Endothelial cell of umbilical vein (primary cell): ENCODE measurements at regions of chr5 and their contacts with region 1.

Region 1: GRCh38 chr5:127875235-127876021 is 172.2 kb downstream of the CCDC192 start:
- DNase-seq: peak; percentile 70
- H3K4me3 ChIP-seq: no peak overlapping the region
- H3K27ac ChIP-seq: no peak overlapping the region
- H3K4me1 ChIP-seq: peaks cover 27% of the 10 kb centered on the region
- H3K27me3 ChIP-seq: no peaks in the 10 kb centered on the region
- CTCF ChIP-seq: peak in 1 of 2 donors; percentile 29
- POLR2A ChIP-seq: no peak

Region 2: DNA sequence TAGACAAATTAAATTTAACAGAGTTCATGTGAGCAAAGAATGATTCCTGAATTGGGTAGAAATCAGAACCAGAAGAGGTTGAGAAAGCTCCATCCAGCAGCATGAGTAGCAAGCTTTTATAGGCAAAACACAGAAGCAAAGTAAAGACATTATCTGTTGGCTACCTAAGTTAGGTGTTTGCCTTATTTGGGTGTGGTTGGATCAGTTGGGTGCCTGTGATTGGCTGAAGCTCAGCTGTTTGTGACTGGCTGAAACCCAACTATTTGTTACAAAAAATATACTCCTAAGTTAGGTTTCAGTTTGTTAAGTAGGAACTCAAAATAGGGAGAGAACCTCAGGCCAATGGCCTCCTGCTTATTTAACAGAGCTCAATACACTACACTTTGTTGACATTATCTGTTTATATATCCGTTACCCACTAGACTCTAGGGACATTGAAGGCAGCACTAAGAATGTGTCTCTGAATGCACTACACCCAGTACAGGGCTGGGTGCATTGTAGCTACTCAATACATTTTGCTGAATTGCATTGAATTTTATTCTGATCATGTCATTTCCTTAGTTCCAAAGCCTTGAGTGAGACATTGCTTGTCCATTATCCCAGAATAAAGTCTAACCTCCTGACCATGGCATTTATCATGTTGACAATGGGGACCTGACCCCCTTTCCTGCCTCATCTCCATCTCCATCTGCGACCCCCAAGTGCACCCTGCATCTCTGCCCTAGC is 73.5 kb before region 1 on chr5:
- CTCF ChIA-PET with region 1: interaction called, 6 read pairs
- POLR2A ChIA-PET with region 1: interaction called, 3 read pairs
- dilution Hi-C with region 1: no loop called
- intact Hi-C with region 1: loop called (anchors 1 kb)
- DNase-seq: peak; percentile 71
- H3K4me3 ChIP-seq: no peak overlapping the region
- H3K27ac ChIP-seq: peak overlapping the region; percentile 75
- H3K4me1 ChIP-seq: peaks cover 17% of the 10 kb centered on the region
- H3K27me3 ChIP-seq: no peaks in the 10 kb centered on the region
- CTCF ChIP-seq: no peak
- POLR2A ChIP-seq: no peak

Region 3: DNA sequence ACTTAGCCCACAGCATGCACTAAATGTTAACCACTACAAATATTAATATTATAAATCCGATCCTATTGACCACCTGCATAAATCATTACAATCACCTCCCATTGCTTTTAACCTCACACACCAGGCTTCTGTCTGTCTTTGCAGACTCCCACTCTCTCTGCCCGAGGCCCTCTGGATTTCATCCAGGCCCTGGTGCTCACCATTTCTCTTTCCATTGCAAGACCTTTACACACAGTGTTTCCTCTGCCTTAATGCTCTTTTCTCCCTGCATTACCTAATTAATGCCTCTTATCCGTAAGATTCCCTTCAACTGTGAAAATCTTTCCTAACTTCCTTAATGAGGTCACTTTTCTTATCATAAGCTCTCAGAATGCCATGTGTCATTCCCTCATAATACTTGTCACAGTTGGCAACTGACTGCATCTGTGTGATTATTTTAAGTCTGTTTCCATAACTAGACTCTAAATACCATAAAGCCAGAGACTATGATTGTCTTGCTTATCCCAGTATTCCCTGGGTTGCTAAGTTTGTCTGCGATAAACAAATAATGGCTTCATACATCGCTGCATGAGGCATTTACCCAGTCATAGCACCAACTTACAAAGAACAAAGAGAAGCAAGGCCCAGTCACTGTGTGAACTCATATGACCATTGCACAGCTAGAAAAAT is 17.2 kb before region 1 on chr5:
- CTCF ChIA-PET with region 1: interaction called, 10 read pairs
- POLR2A ChIA-PET with region 1: no interaction called
- dilution Hi-C with region 1: no loop called
- intact Hi-C with region 1: loop called (anchors 1 kb)
- DNase-seq: peak; percentile 89
- H3K4me3 ChIP-seq: no peak overlapping the region
- H3K27ac ChIP-seq: peak overlapping the region; percentile 84
- H3K4me1 ChIP-seq: peaks cover 27% of the 10 kb centered on the region
- H3K27me3 ChIP-seq: no peaks in the 10 kb centered on the region
- CTCF ChIP-seq: no peak
- POLR2A ChIP-seq: no peak

Region 4: DNA sequence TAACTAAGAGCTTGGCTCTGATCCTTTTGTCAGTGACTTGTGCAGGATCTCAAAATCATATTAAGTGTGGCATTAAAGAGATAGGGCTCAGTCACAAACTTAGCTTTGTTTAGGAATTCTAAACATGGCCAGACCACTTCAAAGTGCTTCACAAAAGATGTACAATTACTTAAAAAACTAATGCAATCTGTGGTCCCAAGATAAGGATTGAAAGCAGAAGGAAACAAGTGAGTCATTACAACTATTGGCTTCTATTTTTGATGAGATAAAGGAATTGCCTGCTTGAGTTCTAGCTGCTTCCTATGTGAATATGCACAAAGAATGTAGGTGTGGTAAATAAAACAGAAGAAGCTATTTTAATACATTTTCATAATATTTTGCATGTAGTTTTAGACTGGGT is 163.2 kb after region 1 on chr5:
- CTCF ChIA-PET with region 1: interaction called, 12 read pairs
- POLR2A ChIA-PET with region 1: no interaction called
- dilution Hi-C with region 1: no loop called
- intact Hi-C with region 1: loop called (anchors 1 kb)
- DNase-seq: peak; percentile 94
- H3K4me3 ChIP-seq: no peak overlapping the region
- H3K27ac ChIP-seq: peak overlapping the region; percentile 87
- H3K4me1 ChIP-seq: peaks cover 29% of the 10 kb centered on the region
- H3K27me3 ChIP-seq: no peaks in the 10 kb centered on the region
- CTCF ChIP-seq: no peak
- POLR2A ChIP-seq: peak; percentile 83

Region 5: DNA sequence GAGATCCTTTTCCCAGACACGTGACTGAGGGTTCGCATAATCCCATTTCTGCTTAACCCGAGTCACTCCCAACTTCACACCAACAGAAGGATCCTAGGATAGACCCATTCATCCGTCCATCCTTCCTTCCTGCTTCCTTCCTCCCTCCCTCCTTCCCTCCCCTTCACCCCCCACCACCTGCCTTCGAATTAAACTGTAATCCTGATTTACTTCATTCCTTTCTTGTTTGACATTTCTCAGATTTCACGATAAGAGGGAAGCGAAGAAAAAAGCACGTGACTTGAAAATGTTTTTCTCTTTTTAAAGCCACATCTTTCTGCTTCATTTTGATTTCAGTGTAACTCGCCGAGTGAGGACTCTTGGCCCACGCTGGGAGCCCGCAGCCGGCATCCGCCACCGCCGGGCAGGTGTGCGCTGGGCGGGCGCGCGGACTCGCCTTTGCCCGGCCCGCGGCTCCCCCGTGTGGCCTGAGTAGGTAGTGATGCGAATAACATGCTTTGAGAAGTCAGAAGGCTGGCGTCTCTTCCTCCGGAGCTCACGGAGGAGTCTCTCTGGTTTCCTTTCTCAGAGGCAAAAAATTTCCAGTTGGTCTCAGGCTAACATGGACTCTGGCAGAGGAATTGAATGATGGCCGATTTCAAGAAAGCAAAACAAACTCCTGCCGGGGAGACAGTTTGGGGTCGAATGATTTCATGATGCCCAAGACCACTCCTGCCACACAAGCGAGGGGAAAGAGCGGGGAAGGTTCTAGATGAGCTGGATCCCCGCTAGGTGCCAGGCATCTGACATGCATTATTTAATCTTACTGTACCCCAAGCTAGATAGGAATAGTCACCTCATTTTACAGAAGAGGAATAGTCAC is 325.9 kb after region 1 on chr5:
- CTCF ChIA-PET with region 1: interaction called, 79 read pairs
- POLR2A ChIA-PET with region 1: no interaction called
- dilution Hi-C with region 1: no loop called
- intact Hi-C with region 1: loop called (anchors 1 kb)
- DNase-seq: peak; percentile 63
- H3K4me3 ChIP-seq: no peak overlapping the region
- H3K27ac ChIP-seq: no peak overlapping the region
- H3K4me1 ChIP-seq: peaks cover 10% of the 10 kb centered on the region
- H3K27me3 ChIP-seq: no peaks in the 10 kb centered on the region
- CTCF ChIP-seq: peak; percentile 79 to 85
- POLR2A ChIP-seq: no peak

Region 6: GRCh38 chr5:128674825-128675446 is 799.5 kb after region 1 on chr5:
- CTCF ChIA-PET with region 1: no interaction called
- POLR2A ChIA-PET with region 1: no interaction called
- dilution Hi-C with region 1: no loop called
- intact Hi-C with region 1: loop called (anchors 10 kb)
- DNase-seq: peak; percentile 63
- H3K4me3 ChIP-seq: no peak overlapping the region
- H3K27ac ChIP-seq: no peak overlapping the region
- H3K4me1 ChIP-seq: no peaks in the 10 kb centered on the region
- H3K27me3 ChIP-seq: no peaks in the 10 kb centered on the region
- CTCF ChIP-seq: peak; percentile 64 to 67
- POLR2A ChIP-seq: no peak